B cell (primary cell): ENCODE measurements at regions of chr15 and their contacts with region 1.

Region 1: DNA sequence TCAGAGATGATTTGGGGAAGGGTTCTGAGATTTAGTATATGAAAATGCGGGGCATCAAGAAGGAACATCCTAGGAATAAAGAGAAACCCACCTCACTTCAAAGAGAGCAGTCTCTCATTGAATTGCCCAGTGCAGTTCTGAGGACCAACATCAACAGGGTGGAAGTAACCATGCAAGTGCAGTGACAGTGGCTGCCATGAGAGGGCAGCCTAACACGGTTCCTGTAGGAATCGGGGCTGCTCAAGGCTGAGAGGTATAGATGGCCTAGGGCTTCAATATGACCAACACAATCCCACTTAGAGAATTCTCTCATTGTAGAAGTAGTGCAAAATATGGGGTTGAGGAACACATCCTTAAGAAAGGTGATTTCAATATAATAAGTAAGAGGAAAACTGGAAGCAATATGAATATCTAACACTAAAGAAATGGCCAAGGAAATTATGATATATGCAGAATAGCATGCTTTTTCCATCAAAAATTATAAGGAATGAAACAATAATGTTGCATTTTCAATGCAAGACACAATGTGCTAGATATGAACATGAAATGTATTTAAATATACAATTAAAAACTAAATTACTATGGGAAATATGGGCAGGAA is 51.1 kb upstream of the ARRDC4 start:
- DNase-seq: peak; percentile 59
- ATAC-seq: peak; percentile 81
- H3K4me3 ChIP-seq: no peak overlapping the region
- H3K4me3 Mint-ChIP-seq: no peak overlapping the region
- H3K27ac ChIP-seq: no peak overlapping the region
- H3K27ac Mint-ChIP-seq: no peak overlapping the region
- H3K4me1 ChIP-seq: no peaks in the 10 kb centered on the region
- H3K4me1 Mint-ChIP-seq: peaks cover 2% of the 10 kb centered on the region
- H3K27me3 ChIP-seq: peaks cover 0 to 3% (median 0%) of the 10 kb centered on the region in 4 experiments
- H3K27me3 Mint-ChIP-seq: peaks cover 13% of the 10 kb centered on the region
- CTCF ChIP-seq: peak; percentile 78

Region 2: DNA sequence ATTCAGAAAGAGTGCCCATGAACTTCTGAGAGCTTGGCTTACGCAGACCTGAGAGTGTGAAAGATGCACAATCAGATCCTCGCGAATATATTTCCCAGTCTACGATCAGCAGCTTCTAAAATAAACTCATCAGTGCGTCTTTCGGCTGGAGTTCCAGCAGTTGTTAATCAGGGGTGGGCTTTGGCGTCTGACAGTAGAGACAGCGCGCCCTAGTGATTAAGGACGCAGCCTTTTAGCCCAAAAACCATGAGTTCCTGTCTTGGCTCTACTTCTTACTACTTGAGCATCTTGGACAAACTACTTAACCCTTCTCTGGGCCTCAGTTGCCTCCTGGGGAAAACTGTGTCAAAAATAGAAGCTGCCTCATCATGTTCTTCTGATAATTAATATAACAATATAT is 35.3 kb after region 1 on chr15:
- CTCF ChIA-PET with region 1: no interaction called
- POLR2A ChIA-PET with region 1: no interaction called
- intact Hi-C with region 1: no loop called
- DNase-seq: no peak
- ATAC-seq: no peak
- H3K4me3 ChIP-seq: no peak overlapping the region
- H3K4me3 Mint-ChIP-seq: no peak overlapping the region
- H3K27ac ChIP-seq: no peak overlapping the region
- H3K27ac Mint-ChIP-seq: no peak overlapping the region
- H3K4me1 ChIP-seq: no peaks in the 10 kb centered on the region
- H3K4me1 Mint-ChIP-seq: no peaks in the 10 kb centered on the region
- H3K27me3 ChIP-seq: peaks cover 0 to 5% (median 0%) of the 10 kb centered on the region in 4 experiments
- H3K27me3 Mint-ChIP-seq: peaks cover 1% of the 10 kb centered on the region
- CTCF ChIP-seq: no peak

Region 3: DNA sequence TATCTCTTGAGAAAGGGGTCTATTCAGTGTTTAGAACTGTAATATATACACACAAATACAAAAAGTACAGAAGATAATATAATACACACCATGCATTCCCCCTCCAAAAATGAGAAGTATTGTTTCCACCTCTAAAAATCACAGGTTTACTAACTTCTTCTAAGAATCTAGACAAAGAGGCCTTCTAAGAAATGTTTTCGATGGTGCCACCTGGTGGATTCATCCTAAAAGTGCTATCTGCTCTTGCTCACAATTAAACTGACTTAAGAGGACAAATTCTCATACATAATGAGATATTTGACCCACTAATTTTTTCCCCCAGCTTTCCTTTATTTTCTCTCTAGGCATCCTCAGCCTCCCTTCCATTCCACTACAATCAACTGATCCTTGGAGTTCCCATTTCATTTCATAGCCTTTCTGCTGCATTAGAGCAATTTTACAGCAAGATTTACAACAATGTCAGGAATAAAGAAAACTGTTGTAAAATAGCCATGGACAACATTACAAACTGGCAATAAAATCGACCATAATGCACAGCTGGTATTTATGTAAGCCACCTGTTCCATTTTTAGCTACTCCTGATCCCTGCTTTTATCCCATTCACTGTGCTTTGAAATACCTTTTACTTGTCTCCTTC is 175.7 kb after region 1 on chr15:
- CTCF ChIA-PET with region 1: interaction called, 12 read pairs
- POLR2A ChIA-PET with region 1: no interaction called
- intact Hi-C with region 1: no loop called
- DNase-seq: peak; percentile 48
- ATAC-seq: no peak
- H3K4me3 ChIP-seq: no peak overlapping the region
- H3K4me3 Mint-ChIP-seq: no peak overlapping the region
- H3K27ac ChIP-seq: no peak overlapping the region
- H3K27ac Mint-ChIP-seq: no peak overlapping the region
- H3K4me1 ChIP-seq: no peaks in the 10 kb centered on the region
- H3K4me1 Mint-ChIP-seq: no peaks in the 10 kb centered on the region
- H3K27me3 ChIP-seq: no peaks in the 10 kb centered on the region
- H3K27me3 Mint-ChIP-seq: no peaks in the 10 kb centered on the region
- CTCF ChIP-seq: peak; percentile 74